Activated CD4-positive, alpha-beta memory T cell treated with anti-CD3 and anti-CD28 coated beads, Interleukin-2, amount 10 ng/mL, durations not matched to agents 7 days and 5 days (primary cell): ENCODE measurements at regions of chr14 and their contacts with region 1.

Region 1: GRCh38 chr14:61388173-61388975 is 67.0 kb downstream of the PRKCH start:
- DNase-seq: peak; percentile 40
- H3K4me3 Mint-ChIP-seq: peak overlapping the region; percentile 41
- H3K27ac Mint-ChIP-seq: no peak overlapping the region
- H3K4me1 Mint-ChIP-seq: peaks cover 13% of the 10 kb centered on the region
- H3K27me3 Mint-ChIP-seq: no peaks in the 10 kb centered on the region

Region 2: GRCh38 chr14:61321385-61322010 is 66.9 kb before region 1 on chr14 and contains the start of gene PRKCH:
- CTCF ChIA-PET with region 1: no interaction called
- POLR2A ChIA-PET with region 1: interaction called, 62 read pairs
- DNase-seq: peak; percentile 91
- H3K4me3 Mint-ChIP-seq: peak within 1 kb of the TSS; percentile 87
- H3K27ac Mint-ChIP-seq: peak within 1 kb of the TSS; percentile 86
- H3K4me1 Mint-ChIP-seq: peaks cover 24% of the 10 kb centered on the region
- H3K27me3 Mint-ChIP-seq: no peaks in the 10 kb centered on the region
- total RNA-seq, gene PRKCH: 186 to 195 TPM

Region 3: DNA sequence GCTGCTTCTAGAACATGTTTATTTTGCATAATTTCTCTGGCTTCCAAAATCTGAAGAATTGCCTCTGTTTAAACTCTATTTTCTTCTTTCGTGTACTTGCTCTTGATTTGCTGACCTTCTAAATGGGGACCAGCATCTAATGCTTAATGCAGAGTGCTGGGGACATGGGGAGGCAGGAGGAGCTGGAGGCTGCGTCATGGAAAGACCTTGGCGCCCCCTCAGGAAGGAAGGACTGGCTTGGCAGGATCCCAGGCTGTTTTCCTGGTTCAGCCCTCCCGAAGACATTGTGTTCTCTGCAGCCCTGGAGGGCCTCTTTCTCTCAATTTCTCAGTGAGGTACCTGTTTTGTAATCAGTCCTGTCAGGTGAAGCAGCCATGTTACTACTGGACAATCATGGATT is 61.5 kb before region 1 on chr14:
- CTCF ChIA-PET with region 1: interaction called, 6 read pairs
- POLR2A ChIA-PET with region 1: interaction called, 69 read pairs
- DNase-seq: no peak
- H3K4me3 Mint-ChIP-seq: peak overlapping the region; percentile 87
- H3K27ac Mint-ChIP-seq: peak overlapping the region; percentile 92
- H3K4me1 Mint-ChIP-seq: peaks cover 63% of the 10 kb centered on the region
- H3K27me3 Mint-ChIP-seq: no peaks in the 10 kb centered on the region

Region 4: GRCh38 chr14:61342486-61342885 is 45.9 kb before region 1 on chr14:
- CTCF ChIA-PET with region 1: interaction called, 7 read pairs
- POLR2A ChIA-PET with region 1: interaction called, 53 read pairs
- DNase-seq: peak; percentile 91
- H3K4me3 Mint-ChIP-seq: peak overlapping the region; percentile 62
- H3K27ac Mint-ChIP-seq: peak overlapping the region; percentile 95
- H3K4me1 Mint-ChIP-seq: peaks cover 94% of the 10 kb centered on the region
- H3K27me3 Mint-ChIP-seq: no peaks in the 10 kb centered on the region

Region 5: GRCh38 chr14:61377749-61378148 is 10.6 kb before region 1 on chr14:
- CTCF ChIA-PET with region 1: no interaction called
- POLR2A ChIA-PET with region 1: interaction called, 17 read pairs
- DNase-seq: no peak
- H3K4me3 Mint-ChIP-seq: no peak overlapping the region
- H3K27ac Mint-ChIP-seq: no peak overlapping the region
- H3K4me1 Mint-ChIP-seq: peaks cover 38% of the 10 kb centered on the region
- H3K27me3 Mint-ChIP-seq: no peaks in the 10 kb centered on the region

Region 6: DNA sequence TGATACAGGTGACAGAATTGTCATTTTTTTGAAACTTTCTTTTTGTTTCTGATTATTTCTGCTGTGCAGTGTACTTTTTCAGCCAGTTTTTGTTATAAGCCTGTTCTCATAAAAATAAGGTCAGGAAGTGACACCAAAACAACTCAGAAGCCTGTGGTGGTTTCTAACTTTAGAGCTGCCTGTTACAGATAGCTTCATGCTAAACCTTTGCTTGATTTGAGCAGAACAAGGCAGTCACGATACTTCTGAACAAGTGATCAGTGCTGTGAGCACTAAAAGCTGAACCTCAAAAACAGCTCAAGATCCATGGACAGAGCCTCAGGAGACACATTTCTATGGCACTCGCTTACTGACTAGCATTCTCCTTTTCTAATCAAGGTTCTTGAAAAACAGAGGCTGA is 15.0 kb after region 1 on chr14:
- CTCF ChIA-PET with region 1: interaction called, 11 read pairs
- POLR2A ChIA-PET with region 1: interaction called, 10 read pairs
- DNase-seq: peak; percentile 40
- H3K4me3 Mint-ChIP-seq: peak overlapping the region; percentile 28
- H3K27ac Mint-ChIP-seq: peak overlapping the region; percentile 88
- H3K4me1 Mint-ChIP-seq: peaks cover 72% of the 10 kb centered on the region
- H3K27me3 Mint-ChIP-seq: no peaks in the 10 kb centered on the region

Region 7: DNA sequence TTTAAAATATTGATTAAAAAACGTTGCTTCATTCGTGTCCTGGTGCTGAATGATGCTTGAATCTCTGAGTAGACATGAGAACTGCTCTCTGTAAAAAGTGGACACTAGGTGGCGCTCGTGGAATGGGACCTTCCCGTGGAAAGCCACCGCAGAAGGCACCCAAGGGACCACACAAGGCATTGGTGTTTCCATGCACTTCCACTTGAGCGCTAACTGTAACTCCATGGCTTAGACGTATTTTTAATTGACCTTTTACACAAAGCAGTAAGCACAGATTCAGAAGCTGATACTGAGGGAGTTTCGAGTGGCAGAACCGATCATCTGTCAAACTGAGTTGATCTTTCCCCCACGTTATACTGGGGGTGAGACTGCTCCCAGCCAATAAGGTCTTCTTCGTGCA is 68.3 kb after region 1 on chr14:
- CTCF ChIA-PET with region 1: interaction called, 7 read pairs
- POLR2A ChIA-PET with region 1: interaction called, 41 read pairs
- DNase-seq: peak; percentile 82
- H3K4me3 Mint-ChIP-seq: no peak overlapping the region
- H3K27ac Mint-ChIP-seq: peak overlapping the region; percentile 33
- H3K4me1 Mint-ChIP-seq: peaks cover 88% of the 10 kb centered on the region
- H3K27me3 Mint-ChIP-seq: no peaks in the 10 kb centered on the region